Breast epithelium (tissue), 4 donors: ENCODE measurements at regions of chrX and their contacts with region 1.

Region 1: GRCh38 chrX:12403474-12404082 is 265.3 kb downstream of the FRMPD4 start:
- DNase-seq: no peak
- H3K4me3 ChIP-seq: no peak overlapping the region
- H3K27ac ChIP-seq: no peak overlapping the region
- H3K4me1 ChIP-seq: no peaks in the 10 kb centered on the region
- H3K27me3 ChIP-seq: peaks cover 0 to 29% of the 10 kb centered on the region in 2 donors
- CTCF ChIP-seq: no peak
- POLR2A ChIP-seq: no peak

Region 2: DNA sequence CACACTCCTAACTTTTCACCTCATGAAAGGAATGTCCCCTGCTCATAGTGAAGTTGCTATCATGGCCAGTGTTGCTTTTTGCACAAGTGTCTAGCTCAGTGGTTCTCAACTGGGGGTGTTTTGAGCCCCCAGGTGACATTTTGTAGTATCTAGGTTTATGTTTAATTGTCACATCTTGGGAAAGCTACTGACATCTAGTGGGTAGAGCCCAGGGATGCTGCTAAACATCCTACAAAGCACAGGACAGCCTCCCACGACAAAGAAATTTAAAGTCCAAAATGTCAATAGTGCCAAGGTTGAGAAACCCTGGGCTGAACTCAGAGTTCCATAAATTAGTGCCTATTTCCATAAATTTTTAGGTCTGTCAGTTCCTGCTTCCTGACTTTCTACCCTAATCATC is 1363.2 kb before region 1 on chrX:
- intact Hi-C with region 1: no loop called
- DNase-seq: no peak
- H3K4me3 ChIP-seq: no peak overlapping the region
- H3K27ac ChIP-seq: no peak overlapping the region
- H3K4me1 ChIP-seq: no peaks in the 10 kb centered on the region
- H3K27me3 ChIP-seq: no peaks in the 10 kb centered on the region
- CTCF ChIP-seq: no peak
- POLR2A ChIP-seq: no peak

Region 3: GRCh38 chrX:12370497-12370986 is 33.0 kb before region 1 on chrX:
- intact Hi-C with region 1: loop called (anchors 2 kb)
- DNase-seq: no peak
- H3K4me3 ChIP-seq: no peak overlapping the region
- H3K27ac ChIP-seq: no peak overlapping the region
- H3K4me1 ChIP-seq: no peaks in the 10 kb centered on the region
- H3K27me3 ChIP-seq: peaks cover 0 to 33% of the 10 kb centered on the region in 2 donors
- CTCF ChIP-seq: no peak
- POLR2A ChIP-seq: no peak